H1 (cell line): ENCODE measurements at regions of chr2 and their contacts with region 1.

Region 1: DNA sequence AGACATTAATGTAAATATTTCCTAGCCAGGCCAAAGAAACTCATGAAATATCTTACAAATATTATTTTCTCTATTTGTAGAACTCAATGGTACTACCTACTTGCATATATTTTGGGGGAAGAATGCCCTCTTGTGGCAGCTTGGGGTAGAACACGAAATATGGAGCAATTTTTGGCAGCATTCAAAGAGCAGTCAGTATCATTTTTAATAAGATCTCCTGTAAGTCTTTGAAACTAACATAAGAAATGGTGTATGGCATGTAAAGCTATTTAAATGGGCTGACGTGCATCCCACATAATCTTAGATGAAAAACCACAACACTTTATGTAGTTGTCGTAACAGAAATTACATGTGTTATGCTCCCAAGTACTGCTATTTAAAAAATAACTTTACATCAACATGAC is 62.3 kb upstream of the CCDC195 start:
- DNase-seq: peak; percentile 9 to 68
- H3K4me3 ChIP-seq: no peak overlapping the region
- H3K27ac ChIP-seq: no peak overlapping the region
- H3K4me1 ChIP-seq: no peaks in the 10 kb centered on the region
- H3K27me3 ChIP-seq: no peaks in the 10 kb centered on the region
- CTCF ChIP-seq: peak in 2 of 3 experiments; percentile 58 to 61; a peak in 2 of 4 replicates
- EP300 ChIP-seq: no peak
- POLR2A ChIP-seq: no peak
- RAD21 ChIP-seq: peak; percentile 76 to 78

Region 2: DNA sequence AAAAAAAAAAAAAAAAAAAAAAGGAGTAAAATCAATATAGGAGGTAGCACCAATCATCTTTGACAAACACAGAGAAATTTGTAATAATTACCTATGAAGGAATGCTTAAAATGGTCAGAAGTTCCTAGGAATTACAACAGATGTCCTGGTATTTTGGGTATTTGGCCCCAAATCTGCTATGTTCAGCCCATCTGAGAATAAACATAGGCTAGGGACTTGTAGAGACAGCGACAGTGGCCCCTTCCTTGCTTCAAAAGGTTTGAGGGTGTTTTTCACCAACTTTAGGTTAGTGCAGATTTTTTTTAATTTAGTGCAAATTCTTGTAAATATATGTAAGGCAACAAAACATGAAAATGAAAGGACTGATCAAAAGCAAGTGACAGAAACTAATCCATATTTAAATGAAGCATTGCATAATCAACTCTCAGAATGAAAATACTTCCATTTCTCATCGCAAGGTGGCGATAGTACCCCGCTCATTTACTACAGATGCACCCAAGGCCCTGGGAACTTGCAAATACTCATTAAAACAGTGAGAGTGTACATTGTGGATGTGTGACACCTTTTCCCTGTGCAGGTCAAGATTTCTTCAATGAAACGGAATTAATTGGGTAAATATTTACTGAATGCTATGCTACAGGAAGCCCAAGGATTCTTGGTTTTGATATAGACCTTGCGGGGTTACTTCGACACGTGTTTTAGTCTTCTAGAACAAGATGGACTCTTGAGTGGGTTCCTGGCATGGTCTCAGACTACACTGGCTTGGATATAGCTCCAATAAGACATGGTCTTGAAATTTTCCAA is 421.2 kb before region 1 on chr2:
- CTCF ChIA-PET with region 1: interaction called, 13 read pairs
- POLR2A ChIA-PET with region 1: no interaction called
- DNase-seq: peak in 1 of 2 experiments; percentile 76
- H3K4me3 ChIP-seq: no peak overlapping the region
- H3K27ac ChIP-seq: no peak overlapping the region
- H3K4me1 ChIP-seq: no peaks in the 10 kb centered on the region
- H3K27me3 ChIP-seq: no peaks in the 10 kb centered on the region
- CTCF ChIP-seq: peak in 2 of 3 experiments; percentile 74 to 78; a peak in 3 of 4 replicates
- EP300 ChIP-seq: no peak
- POLR2A ChIP-seq: no peak
- RAD21 ChIP-seq: peak; percentile 89 to 91

Region 3: DNA sequence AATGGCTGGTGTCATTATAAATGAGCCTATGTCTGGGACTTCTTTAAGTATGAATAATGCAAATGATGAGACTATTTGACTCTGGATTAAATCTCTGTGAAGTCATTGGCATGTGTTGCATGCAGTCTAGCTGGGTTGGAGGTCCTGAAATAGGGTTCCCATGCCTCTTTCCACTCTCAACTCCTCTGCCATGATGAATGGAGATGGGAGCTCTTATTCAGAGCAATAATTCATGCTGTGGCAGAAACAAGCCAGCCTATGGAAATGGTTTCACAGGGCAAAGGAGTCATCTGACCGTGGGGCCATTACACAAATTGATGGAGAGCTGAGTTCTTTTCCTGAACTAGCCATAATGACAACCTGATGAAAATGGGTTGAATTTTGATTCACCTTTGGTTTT is 46.8 kb before region 1 on chr2:
- CTCF ChIA-PET with region 1: no interaction called
- POLR2A ChIA-PET with region 1: no interaction called
- DNase-seq: no peak
- H3K4me3 ChIP-seq: no peak overlapping the region
- H3K27ac ChIP-seq: no peak overlapping the region
- H3K4me1 ChIP-seq: no peaks in the 10 kb centered on the region
- H3K27me3 ChIP-seq: no peaks in the 10 kb centered on the region
- CTCF ChIP-seq: no peak
- EP300 ChIP-seq: no peak
- POLR2A ChIP-seq: no peak
- RAD21 ChIP-seq: no peak

Region 4: GRCh38 chr2:224764565-224765236 is 13.8 kb before region 1 on chr2:
- CTCF ChIA-PET with region 1: interaction called, 12 read pairs
- POLR2A ChIA-PET with region 1: no interaction called
- DNase-seq: no peak
- H3K4me3 ChIP-seq: no peak overlapping the region
- H3K27ac ChIP-seq: no peak overlapping the region
- H3K4me1 ChIP-seq: no peaks in the 10 kb centered on the region
- H3K27me3 ChIP-seq: no peaks in the 10 kb centered on the region
- CTCF ChIP-seq: no peak
- EP300 ChIP-seq: no peak
- POLR2A ChIP-seq: no peak
- RAD21 ChIP-seq: no peak

Region 5: GRCh38 chr2:224875841-224876240 is 97.4 kb after region 1 on chr2:
- CTCF ChIA-PET with region 1: no interaction called
- POLR2A ChIA-PET with region 1: no interaction called
- DNase-seq: no peak
- H3K4me3 ChIP-seq: no peak overlapping the region
- H3K27ac ChIP-seq: no peak overlapping the region
- H3K4me1 ChIP-seq: no peaks in the 10 kb centered on the region
- H3K27me3 ChIP-seq: no peaks in the 10 kb centered on the region
- CTCF ChIP-seq: no peak
- EP300 ChIP-seq: no peak
- POLR2A ChIP-seq: no peak
- RAD21 ChIP-seq: no peak